ENCODE measurements at regions of chr10 and their contacts with region 1.

Region 1: DNA sequence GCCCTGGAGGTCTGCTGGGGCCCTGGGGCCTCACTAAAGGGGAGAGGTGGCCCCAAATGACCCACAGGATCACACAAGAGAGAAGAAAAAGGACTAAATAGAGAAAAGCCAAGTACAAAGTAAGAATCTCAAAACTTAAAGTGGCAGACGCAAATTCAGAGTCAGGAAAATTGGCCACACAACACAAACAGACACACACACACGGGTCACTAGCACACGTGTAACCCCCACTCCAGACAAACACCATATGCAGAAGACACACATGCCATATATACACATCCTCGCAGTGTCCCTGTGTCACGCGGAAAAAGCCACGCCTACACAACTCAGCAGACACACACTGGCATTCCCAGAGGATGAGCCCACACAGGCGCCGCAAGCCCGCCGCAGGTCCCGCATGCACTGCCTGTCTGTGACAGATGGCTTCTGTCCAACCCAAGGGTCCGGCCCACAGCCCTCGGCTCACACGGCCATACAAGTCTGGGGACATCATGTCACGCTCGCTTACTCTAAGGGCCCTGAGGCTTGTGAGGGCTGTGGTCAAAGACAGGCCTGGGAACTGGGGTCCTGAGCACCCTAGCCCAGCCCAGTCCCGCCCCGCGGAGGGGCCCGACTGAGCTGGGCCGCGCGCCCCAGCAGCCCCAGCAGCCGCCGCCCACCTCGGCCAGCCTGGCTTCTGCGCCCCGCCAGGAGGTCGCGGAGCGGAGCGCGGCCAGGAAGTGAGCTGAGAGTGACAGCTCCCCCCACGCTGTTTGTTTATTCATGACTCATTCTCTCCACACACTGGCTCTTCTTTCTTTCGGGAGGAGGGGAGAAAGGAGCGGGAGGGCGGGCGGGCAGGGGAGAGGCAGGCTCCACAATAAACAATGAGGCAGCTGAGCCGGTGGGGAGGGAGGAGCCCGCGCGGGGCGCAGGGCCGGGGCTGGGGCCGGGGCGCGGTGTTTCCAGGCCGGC is 95.5 kb upstream of the ZMIZ1 start:
- DNase-seq: peak; percentile 95
- H3K4me3 ChIP-seq: peak overlapping the region; percentile 51
- H3K27ac ChIP-seq: peak overlapping the region; percentile 80
- H3K4me1 ChIP-seq: peaks cover 20% of the 10 kb centered on the region
- H3K27me3 ChIP-seq: no peaks in the 10 kb centered on the region
- CTCF ChIP-seq: no peak

Region 2: DNA sequence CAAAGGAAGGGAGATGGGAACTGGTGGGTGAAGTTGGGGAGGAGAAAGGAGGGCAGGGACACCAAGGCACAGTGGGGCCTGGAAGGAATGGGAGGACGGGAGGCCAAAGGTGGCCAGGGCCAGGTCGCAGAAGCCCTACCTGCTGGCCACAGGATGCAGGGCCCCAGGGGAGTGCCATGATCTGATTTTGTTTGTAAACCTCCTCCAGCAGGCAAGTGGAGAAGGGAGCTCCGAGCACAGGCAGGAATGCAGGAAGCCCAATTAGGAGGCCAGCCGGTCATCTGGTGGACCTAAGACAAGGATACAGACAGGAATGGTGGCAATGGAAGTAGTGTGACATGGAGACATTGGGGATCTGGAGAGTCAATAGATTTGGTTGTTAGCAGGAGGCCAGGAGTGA is 11.5 kb before region 1 on chr10:
- CTCF ChIA-PET with region 1: interaction called, 4 read pairs
- POLR2A ChIA-PET with region 1: interaction called, 16 read pairs
- intact Hi-C with region 1: no loop called
- DNase-seq: no peak
- H3K4me3 ChIP-seq: no peak overlapping the region
- H3K27ac ChIP-seq: no peak overlapping the region
- H3K4me1 ChIP-seq: no peaks in the 10 kb centered on the region
- H3K27me3 ChIP-seq: no peaks in the 10 kb centered on the region
- CTCF ChIP-seq: no peak

Region 3: DNA sequence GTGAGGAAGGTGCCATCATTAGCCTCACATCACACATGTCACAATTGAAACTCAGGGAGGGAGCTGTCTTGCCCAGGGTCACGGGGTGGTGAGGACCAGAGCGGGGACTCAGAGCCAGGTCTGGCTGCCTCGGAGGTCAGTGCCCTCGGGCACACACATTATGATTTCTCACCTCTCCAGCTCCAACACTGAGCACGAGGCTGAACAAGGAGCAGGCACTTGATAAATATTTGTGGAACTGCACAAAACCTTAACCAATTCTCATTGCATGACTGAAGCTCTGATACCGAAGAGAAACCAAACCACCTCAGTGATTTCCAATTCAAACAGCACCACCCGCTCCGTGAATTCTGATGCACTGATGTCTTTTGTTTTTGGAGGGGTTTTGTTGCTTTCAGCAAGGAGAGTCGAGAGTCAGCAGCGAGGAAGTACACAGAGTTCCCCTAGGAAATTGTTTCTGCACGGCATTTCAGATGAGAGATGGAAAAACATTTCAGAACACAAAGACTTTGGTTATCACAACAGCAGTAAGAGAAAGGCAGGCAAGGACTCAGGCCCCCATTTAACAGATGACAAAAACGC is 40.3 kb after region 1 on chr10:
- CTCF ChIA-PET with region 1: no interaction called
- POLR2A ChIA-PET with region 1: interaction called, 14 read pairs
- intact Hi-C with region 1: no loop called
- DNase-seq: no peak
- H3K4me3 ChIP-seq: no peak overlapping the region
- H3K27ac ChIP-seq: no peak overlapping the region
- H3K4me1 ChIP-seq: no peaks in the 10 kb centered on the region
- H3K27me3 ChIP-seq: no peaks in the 10 kb centered on the region
- CTCF ChIP-seq: no peak